MCF 10A (cell line): ENCODE measurements at regions of chr3 and their contacts with region 1.

Region 1: DNA sequence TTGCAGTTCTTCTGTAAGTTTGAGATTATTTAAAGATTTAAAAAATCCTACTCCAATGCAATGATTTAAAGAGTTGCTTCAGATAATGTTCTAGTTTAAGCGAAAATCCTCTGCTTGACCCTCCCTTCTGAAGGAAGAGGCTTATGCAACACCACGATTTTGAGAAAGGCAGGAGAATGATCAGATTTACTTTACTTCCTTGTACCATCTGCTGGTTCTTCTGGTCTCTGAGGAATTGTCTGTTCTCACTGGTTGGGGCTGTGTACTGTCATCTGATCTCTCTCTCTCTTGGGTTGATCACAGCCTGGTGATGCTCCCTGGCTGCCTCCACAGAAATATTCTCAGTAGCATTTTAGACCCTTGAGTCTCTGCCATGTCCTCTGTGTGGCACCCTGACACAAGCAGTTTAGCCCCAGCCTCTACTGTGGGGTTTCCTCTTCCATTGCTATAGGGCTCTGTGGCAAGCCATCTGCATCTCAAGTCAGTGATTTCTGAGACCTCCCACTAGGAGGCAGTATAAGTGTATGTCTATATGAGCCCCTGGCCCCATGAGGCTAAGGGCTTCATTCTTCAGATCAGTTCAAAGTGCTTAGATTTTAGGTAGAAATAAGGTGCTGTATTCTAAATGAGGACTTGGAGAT is 50.8 kb upstream of the PLAAT1 start:
- DNase-seq: peak; percentile 56
- H3K4me3 Mint-ChIP-seq: no peak overlapping the region
- H3K27ac Mint-ChIP-seq: no peak overlapping the region
- H3K4me1 Mint-ChIP-seq: no peaks in the 10 kb centered on the region
- H3K27me3 Mint-ChIP-seq: peaks cover 66% of the 10 kb centered on the region
- CTCF ChIP-seq: peak; percentile 32

Region 2: DNA sequence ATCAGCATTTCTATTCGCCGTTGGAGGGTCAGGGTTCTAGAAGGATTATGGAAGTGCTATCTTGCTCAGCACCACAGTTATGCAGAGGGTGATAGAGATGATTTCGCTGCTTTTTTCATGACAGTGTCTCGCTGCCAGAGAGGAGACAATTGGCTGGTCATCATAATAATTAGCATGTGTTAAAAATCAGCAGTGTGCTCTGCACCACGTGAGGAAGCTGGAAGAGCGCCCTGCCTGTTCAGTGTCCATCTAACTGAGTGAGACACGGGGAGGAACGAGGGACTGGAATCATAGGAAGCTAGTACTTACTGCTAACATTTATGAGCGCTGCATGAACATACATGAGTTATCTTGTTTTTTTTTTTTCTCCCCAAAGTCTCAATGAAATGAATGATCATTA is 65.4 kb before region 1 on chr3:
- CTCF ChIA-PET with region 1: no interaction called
- POLR2A ChIA-PET with region 1: no interaction called
- intact Hi-C with region 1: no loop called
- DNase-seq: no peak
- H3K4me3 Mint-ChIP-seq: no peak overlapping the region
- H3K27ac Mint-ChIP-seq: no peak overlapping the region
- H3K4me1 Mint-ChIP-seq: no peaks in the 10 kb centered on the region
- H3K27me3 Mint-ChIP-seq: peaks cover 91% of the 10 kb centered on the region
- CTCF ChIP-seq: no peak

Region 3: GRCh38 chr3:193168911-193169310 is 21.4 kb before region 1 on chr3:
- CTCF ChIA-PET with region 1: no interaction called
- POLR2A ChIA-PET with region 1: no interaction called
- intact Hi-C with region 1: no loop called
- DNase-seq: no peak
- H3K4me3 Mint-ChIP-seq: no peak overlapping the region
- H3K27ac Mint-ChIP-seq: no peak overlapping the region
- H3K4me1 Mint-ChIP-seq: no peaks in the 10 kb centered on the region
- H3K27me3 Mint-ChIP-seq: peaks cover 51% of the 10 kb centered on the region
- CTCF ChIP-seq: no peak

Region 4: GRCh38 chr3:193452338-193452737 is 262.1 kb after region 1 on chr3:
- CTCF ChIA-PET with region 1: no interaction called
- POLR2A ChIA-PET with region 1: no interaction called
- intact Hi-C with region 1: loop called (anchors 5 kb)
- DNase-seq: peak; percentile 7
- H3K4me3 Mint-ChIP-seq: no peak overlapping the region
- H3K27ac Mint-ChIP-seq: no peak overlapping the region
- H3K4me1 Mint-ChIP-seq: no peaks in the 10 kb centered on the region
- H3K27me3 Mint-ChIP-seq: peaks cover 50% of the 10 kb centered on the region
- CTCF ChIP-seq: peak; percentile 21